GM12878 (cell line): ENCODE measurements at regions of chr11 and their contacts with region 1.

Region 1: DNA sequence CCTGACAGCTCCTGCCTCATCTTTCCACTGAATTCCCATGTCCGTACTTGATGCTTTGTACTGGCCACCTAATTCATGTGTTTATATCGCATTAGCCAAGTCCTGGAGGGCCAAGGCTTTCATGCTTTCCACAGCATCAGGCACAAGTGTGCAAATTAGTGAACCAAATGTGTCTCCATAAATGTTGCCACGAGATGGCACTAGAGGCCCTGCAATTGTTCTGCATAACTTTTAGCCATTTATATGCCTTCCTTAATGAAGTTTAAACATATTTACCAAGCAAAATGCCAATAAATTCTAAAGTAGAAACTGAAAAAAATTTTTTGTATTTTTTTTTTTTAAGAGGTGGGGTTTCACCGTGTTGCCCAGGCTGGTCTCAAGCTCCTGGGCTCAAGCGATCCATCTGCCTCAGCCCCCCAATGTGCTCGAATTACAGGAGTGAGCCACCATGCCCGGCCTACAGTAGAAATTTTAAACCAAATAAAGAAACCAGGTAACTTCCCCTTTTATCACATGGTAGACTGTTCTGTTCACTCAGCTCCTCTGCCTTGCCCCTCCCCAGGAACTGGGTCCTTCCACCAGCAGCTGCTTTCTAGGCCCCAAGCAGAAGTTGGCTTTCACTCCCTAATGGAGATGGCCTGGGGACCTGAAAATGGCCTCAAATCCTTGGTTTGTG is 20.8 kb upstream of the IL18BP start:
- DNase-seq: peak; percentile 30
- ATAC-seq: peak; percentile 92
- H3K4me3 ChIP-seq: no peak overlapping the region
- H3K27ac ChIP-seq: peak overlapping the region; percentile 13
- H3K4me1 ChIP-seq: peaks cover 10% of the 10 kb centered on the region
- H3K27me3 ChIP-seq: no peaks in the 10 kb centered on the region
- CTCF ChIP-seq: peak; percentile 45 to 77 (median 59); a peak in 5 of 6 replicates
- EP300 ChIP-seq: no peak
- POLR2A ChIP-seq: no peak
- RAD21 ChIP-seq: peak; percentile 85

Region 2: GRCh38 chr11:71946144-71946571 is 31.7 kb before region 1 on chr11:
- CTCF ChIA-PET with region 1: interaction called, 12 read pairs
- POLR2A ChIA-PET with region 1: no interaction called
- RAD21 ChIA-PET with region 1: interaction called, 5 read pairs
- SMC1A ChIA-PET with region 1: interaction called, 4 read pairs
- in situ Hi-C with region 1: no loop called
- intact Hi-C with region 1: no loop called
- DNase-seq: no peak
- ATAC-seq: peak; percentile 80
- H3K4me3 ChIP-seq: no peak overlapping the region
- H3K27ac ChIP-seq: no peak overlapping the region
- H3K4me1 ChIP-seq: peaks cover 13% of the 10 kb centered on the region; the same call in 1 of the 2 replicates
- H3K27me3 ChIP-seq: no peaks in the 10 kb centered on the region
- CTCF ChIP-seq: no peak
- EP300 ChIP-seq: no peak
- POLR2A ChIP-seq: no peak
- RAD21 ChIP-seq: no peak

Region 3: DNA sequence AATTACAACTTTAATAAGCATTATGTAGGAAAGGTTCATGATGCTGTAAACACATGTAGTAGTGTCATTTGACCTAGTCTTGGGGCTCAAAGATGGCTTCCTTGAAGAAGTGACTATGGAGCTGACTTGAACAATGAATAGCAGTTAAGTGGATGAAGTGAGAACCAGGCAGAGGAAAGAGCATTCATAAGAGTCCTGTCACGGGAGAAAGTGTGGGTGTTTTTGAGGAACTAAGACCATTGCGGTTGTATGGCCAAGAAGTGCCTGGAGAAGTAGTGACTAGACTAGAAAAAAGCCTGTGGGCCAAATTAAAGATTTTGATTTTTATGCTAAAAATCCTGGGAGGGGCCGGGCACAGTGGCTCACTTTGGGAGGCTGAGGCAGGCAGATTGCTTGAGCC is 13.6 kb after region 1 on chr11:
- CTCF ChIA-PET with region 1: interaction called, 93 read pairs
- POLR2A ChIA-PET with region 1: interaction called, 5 read pairs
- RAD21 ChIA-PET with region 1: interaction called, 17 read pairs
- SMC1A ChIA-PET with region 1: interaction called, 67 read pairs
- in situ Hi-C with region 1: no loop called
- intact Hi-C with region 1: no loop called
- DNase-seq: peak; percentile 94
- ATAC-seq: peak; percentile 87
- H3K4me3 ChIP-seq: no peak overlapping the region
- H3K27ac ChIP-seq: peak overlapping the region; percentile 77
- H3K4me1 ChIP-seq: peaks cover 32% of the 10 kb centered on the region
- H3K27me3 ChIP-seq: no peaks in the 10 kb centered on the region
- CTCF ChIP-seq: no peak
- EP300 ChIP-seq: peak; percentile 47 to 92; a peak in 3 of 4 replicates
- POLR2A ChIP-seq: no peak
- RAD21 ChIP-seq: no peak

Region 4: GRCh38 chr11:72015511-72016171 is 37.8 kb after region 1 on chr11:
- CTCF ChIA-PET with region 1: interaction called, 138 read pairs
- POLR2A ChIA-PET with region 1: interaction called, 3 read pairs
- RAD21 ChIA-PET with region 1: interaction called, 51 read pairs
- SMC1A ChIA-PET with region 1: interaction called, 64 read pairs
- in situ Hi-C with region 1: no loop called
- intact Hi-C with region 1: loop called (anchors 1 kb)
- DNase-seq: no peak
- ATAC-seq: peak; percentile 65
- H3K4me3 ChIP-seq: no peak overlapping the region
- H3K27ac ChIP-seq: no peak overlapping the region
- H3K4me1 ChIP-seq: no peaks in the 10 kb centered on the region
- H3K27me3 ChIP-seq: no peaks in the 10 kb centered on the region
- CTCF ChIP-seq: peak; percentile 40 to 72 (median 62); a peak in 5 of 6 replicates
- EP300 ChIP-seq: no peak
- POLR2A ChIP-seq: no peak
- RAD21 ChIP-seq: peak; percentile 55

Region 5: GRCh38 chr11:72085621-72086351 is 107.9 kb after region 1 on chr11:
- CTCF ChIA-PET with region 1: interaction called, 81 read pairs
- POLR2A ChIA-PET with region 1: no interaction called
- RAD21 ChIA-PET with region 1: interaction called, 30 read pairs
- SMC1A ChIA-PET with region 1: interaction called, 47 read pairs
- in situ Hi-C with region 1: no loop called
- intact Hi-C with region 1: no loop called
- DNase-seq: no peak
- ATAC-seq: no peak
- H3K4me3 ChIP-seq: no peak overlapping the region
- H3K27ac ChIP-seq: no peak overlapping the region
- H3K4me1 ChIP-seq: peaks cover 10% of the 10 kb centered on the region
- H3K27me3 ChIP-seq: no peaks in the 10 kb centered on the region
- CTCF ChIP-seq: no peak
- EP300 ChIP-seq: no peak
- POLR2A ChIP-seq: no peak
- RAD21 ChIP-seq: no peak

Region 6: GRCh38 chr11:72413914-72414628 is 436.2 kb after region 1 on chr11:
- CTCF ChIA-PET with region 1: interaction called, 13 read pairs
- POLR2A ChIA-PET with region 1: no interaction called
- RAD21 ChIA-PET with region 1: no interaction called
- SMC1A ChIA-PET with region 1: no interaction called
- in situ Hi-C with region 1: no loop called
- intact Hi-C with region 1: no loop called
- DNase-seq: no peak
- ATAC-seq: peak; percentile 83
- H3K4me3 ChIP-seq: no peak overlapping the region
- H3K27ac ChIP-seq: peak overlapping the region; percentile 53
- H3K4me1 ChIP-seq: peaks cover 23% of the 10 kb centered on the region
- H3K27me3 ChIP-seq: no peaks in the 10 kb centered on the region
- CTCF ChIP-seq: peak; percentile 92 to 98 (median 96); a peak in 5 of 6 replicates
- EP300 ChIP-seq: no peak
- POLR2A ChIP-seq: no peak
- RAD21 ChIP-seq: peak; percentile 81

Region 7: GRCh38 chr11:72703267-72704008 is 725.6 kb after region 1 on chr11:
- CTCF ChIA-PET with region 1: no interaction called
- POLR2A ChIA-PET with region 1: no interaction called
- RAD21 ChIA-PET with region 1: no interaction called
- SMC1A ChIA-PET with region 1: no interaction called
- in situ Hi-C with region 1: no loop called
- intact Hi-C with region 1: no loop called
- DNase-seq: no peak
- ATAC-seq: no peak
- H3K4me3 ChIP-seq: no peak overlapping the region
- H3K27ac ChIP-seq: no peak overlapping the region
- H3K4me1 ChIP-seq: peaks cover 8% of the 10 kb centered on the region
- H3K27me3 ChIP-seq: no peaks in the 10 kb centered on the region
- CTCF ChIP-seq: no peak
- EP300 ChIP-seq: no peak
- POLR2A ChIP-seq: no peak; the same call in 1 of the 2 replicates
- RAD21 ChIP-seq: no peak